ENCODE measurements at regions of chr9 and their contacts with region 1.

Region 1: DNA sequence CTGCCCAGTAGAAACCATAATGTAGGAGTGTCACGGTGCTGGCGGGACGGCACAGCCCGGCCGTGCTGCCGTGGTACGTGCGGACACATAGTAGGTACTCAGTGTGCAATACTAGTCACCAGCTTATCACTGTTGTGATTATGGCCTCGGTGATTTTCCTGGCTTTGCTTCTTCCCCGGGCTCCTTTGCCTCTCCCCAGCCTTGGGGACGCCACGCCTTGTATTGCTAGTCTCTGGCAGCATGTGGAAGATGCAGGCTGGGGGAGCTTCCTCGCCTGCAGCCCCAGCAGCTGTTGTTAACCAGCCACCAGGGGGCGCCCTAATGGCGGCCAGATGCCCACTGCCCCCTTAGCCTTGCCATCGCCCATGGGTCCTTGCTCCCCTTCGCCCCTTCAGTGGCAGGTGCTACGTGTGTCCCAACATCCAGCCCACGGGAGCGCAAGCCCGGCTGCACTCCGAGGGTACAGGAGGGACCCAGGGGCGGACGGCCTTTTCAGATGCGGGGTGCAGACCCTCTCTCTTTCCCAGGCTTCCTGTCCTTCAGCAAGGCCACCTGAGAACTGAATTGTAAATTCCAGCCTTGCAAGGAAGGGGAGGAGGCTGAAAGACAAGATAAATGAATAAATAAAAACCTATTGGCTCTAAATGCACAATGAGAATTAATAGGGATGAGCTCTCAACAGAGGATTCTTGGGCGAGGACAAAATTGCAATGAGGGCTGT is 8.0 kb downstream of the NTNG2 start:
- DNase-seq: peak; percentile 32 to 64 (median 42)
- H3K4me3 ChIP-seq: no peak overlapping the region
- H3K4me3 Mint-ChIP-seq: no peak overlapping the region
- H3K27ac ChIP-seq: no peak overlapping the region
- H3K27ac Mint-ChIP-seq: no peak overlapping the region
- H3K4me1 ChIP-seq: no peaks in the 10 kb centered on the region
- H3K4me1 Mint-ChIP-seq: peaks cover 0 to 3% (median under 1%) of the 10 kb centered on the region in 3 donors
- H3K27me3 ChIP-seq: peaks cover 1% of the 10 kb centered on the region
- H3K27me3 Mint-ChIP-seq: peaks cover 10 to 38% of the 10 kb centered on the region in 2 donors

Region 2: DNA sequence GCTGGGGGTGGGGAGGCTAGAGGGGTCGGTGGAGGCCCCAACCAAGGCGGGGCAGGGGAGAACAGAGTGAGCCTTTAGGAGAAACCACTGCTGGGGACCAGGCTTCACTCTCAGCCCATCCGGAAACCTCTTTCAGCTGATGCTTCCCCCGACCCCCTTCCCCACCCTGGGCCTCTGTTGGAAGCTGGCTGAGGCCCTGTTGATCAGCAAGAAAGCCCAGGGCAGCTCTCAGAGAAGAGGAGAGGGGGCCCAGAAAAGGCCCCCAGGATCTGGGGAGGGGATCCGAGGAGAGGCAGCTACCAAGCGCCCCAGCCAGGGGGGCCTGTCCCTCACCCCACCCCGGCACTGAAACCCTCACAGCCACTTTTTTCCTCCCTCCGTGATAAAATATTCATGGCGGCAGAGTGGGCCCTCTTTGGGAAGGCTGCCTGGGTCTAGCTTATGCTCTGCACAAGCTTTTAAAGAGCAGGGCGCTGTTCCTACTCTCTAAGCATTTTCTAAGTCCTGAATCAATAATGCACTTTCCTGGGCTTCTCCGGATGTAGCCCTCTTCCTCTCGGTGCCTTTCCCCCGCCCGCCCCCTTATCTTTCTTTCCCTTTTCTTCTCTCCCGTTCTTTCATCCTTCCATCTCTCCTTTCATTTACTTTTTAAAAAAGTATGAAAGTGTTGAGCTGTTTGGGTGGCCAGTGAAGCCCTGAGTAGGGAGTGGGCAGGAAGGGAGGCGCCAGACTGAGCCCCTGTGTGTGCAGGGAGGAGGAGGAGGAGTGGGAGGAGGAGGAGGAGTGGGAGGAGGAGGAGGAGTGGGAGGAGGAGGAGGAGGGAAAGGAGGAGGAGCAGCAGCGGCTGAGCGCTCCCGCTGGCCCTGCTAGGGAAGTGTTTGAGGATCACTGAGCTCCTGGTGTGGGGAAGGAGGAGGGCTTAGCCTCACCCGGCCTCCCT is 15.5 kb after region 1 on chr9:
- CTCF ChIA-PET with region 1: no interaction called
- POLR2A ChIA-PET with region 1: no interaction called
- DNase-seq: no peak
- H3K4me3 ChIP-seq: no peak overlapping the region
- H3K4me3 Mint-ChIP-seq: no peak overlapping the region
- H3K27ac ChIP-seq: no peak overlapping the region
- H3K27ac Mint-ChIP-seq: no peak overlapping the region
- H3K4me1 ChIP-seq: no peaks in the 10 kb centered on the region
- H3K4me1 Mint-ChIP-seq: no peaks in the 10 kb centered on the region
- H3K27me3 ChIP-seq: peaks cover 3% of the 10 kb centered on the region
- H3K27me3 Mint-ChIP-seq: peaks cover 4 to 27% of the 10 kb centered on the region in 2 donors

Region 3: DNA sequence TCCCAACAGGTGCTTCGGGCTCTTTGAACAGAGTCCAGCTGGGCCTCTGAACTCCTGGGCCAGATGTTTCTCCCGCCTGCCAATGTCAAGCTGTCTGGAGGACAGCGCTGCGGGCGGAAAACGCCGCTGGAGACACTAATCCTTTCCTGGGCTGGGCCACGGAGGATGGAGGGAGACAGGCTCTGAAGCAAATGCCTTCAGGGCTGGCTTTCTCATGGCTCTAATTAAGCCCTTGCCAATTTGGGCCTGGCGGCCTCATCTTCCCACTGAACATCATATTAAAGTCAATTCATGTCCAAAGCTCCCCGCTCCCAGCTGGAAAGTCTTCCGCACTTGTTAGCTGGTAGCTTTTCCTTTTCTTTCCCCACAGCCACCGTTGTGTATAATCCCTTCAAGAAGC is 64.7 kb after region 1 on chr9:
- CTCF ChIA-PET with region 1: interaction called, 26 read pairs
- POLR2A ChIA-PET with region 1: no interaction called
- DNase-seq: peak in 1 of 5 donors; percentile 33
- H3K4me3 ChIP-seq: no peak overlapping the region
- H3K4me3 Mint-ChIP-seq: no peak overlapping the region
- H3K27ac ChIP-seq: no peak overlapping the region
- H3K27ac Mint-ChIP-seq: no peak overlapping the region
- H3K4me1 ChIP-seq: peaks cover 5% of the 10 kb centered on the region
- H3K4me1 Mint-ChIP-seq: peaks cover 6% of the 10 kb centered on the region in 3 donors
- H3K27me3 ChIP-seq: no peaks in the 10 kb centered on the region
- H3K27me3 Mint-ChIP-seq: peaks cover 3 to 6% of the 10 kb centered on the region in 2 donors

Region 4: DNA sequence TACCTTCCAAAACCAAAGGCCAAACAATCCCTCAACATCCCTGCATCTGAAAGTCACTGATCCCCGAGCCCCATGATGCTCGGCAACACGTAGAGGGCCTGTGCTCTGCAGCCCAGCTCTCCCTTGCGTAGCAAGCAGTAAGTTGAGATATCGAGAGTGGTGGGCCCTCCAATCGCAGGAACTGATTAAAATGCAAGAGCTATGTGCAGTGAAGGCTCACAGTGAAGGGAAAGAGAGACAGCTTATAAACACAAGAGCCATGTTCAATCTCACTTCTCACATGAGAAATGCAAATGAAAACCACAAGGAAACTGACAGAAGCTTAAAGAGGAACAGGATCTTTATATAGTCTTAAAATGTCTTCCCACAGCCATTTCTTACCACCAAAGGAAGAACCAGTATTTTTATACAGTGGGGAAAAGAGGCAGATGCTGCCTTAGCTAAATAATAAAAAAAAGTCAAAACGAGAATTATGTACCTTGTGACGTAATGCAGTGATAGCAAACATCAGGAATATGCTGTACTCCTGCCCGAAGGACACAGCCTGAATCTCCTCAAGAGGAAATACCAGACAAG is 212.2 kb after region 1 on chr9:
- CTCF ChIA-PET with region 1: no interaction called
- POLR2A ChIA-PET with region 1: no interaction called
- DNase-seq: no peak
- H3K4me3 ChIP-seq: no peak overlapping the region
- H3K4me3 Mint-ChIP-seq: no peak overlapping the region
- H3K27ac ChIP-seq: no peak overlapping the region
- H3K27ac Mint-ChIP-seq: peak overlapping the region in 1 of 8 donors; percentile 24
- H3K4me1 ChIP-seq: no peaks in the 10 kb centered on the region
- H3K4me1 Mint-ChIP-seq: peaks cover 15 to 23% (median 21%) of the 10 kb centered on the region in 3 donors
- H3K27me3 ChIP-seq: no peaks in the 10 kb centered on the region
- H3K27me3 Mint-ChIP-seq: no peaks in the 10 kb centered on the region